CD14-positive monocyte (primary cell): ENCODE measurements at regions of chr19 and their contacts with region 1.

Region 1: DNA sequence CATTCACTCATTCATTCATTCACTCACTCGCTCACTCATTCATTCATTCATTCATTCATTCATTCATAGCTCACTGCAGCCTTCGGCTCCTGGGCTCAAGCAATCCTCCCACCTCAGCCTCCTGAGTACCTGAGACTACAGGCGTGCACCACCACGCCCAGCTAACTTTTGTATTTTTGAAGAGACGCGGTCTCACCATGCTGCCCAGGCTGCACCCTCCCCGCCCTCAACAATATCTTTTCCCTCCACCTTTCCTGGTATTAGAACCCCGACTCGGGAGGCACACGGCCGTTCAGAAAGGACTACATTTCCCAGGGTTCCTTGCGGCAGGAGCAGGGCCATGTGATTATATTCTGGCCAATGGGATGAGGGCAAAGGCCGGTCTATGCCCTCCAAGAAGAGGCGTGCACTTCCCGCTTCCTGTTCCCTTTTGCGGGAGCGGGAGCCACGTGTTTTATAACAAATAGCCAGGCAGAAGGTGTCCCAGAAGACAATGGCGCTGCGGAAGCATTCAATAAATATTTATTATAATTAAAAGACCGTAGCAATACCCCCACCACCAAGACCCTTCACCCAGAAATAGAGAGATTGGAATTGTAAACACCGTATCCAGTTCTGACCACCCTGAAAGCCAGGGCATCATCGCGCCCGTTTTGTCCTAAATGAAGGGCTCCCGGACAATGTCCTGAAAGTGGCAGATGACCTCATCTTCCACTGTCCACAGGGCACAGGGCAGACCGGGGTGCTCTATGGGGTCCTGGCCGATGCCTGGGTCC is 15.9 kb downstream of the TICAM1 start:
- DNase-seq: peak; percentile 88 to 95 (median 92)
- H3K4me3 ChIP-seq: peak overlapping the region; percentile 14 to 71 (median 14)
- H3K4me3 Mint-ChIP-seq: peak overlapping the region; percentile 65 to 83
- H3K27ac ChIP-seq: peak overlapping the region; percentile 26 to 67
- H3K27ac Mint-ChIP-seq: peak overlapping the region; percentile 81 to 100 (median 90)
- H3K4me1 ChIP-seq: peaks cover 56 to 59% of the 10 kb centered on the region in 2 donors
- H3K4me1 Mint-ChIP-seq: peaks cover 39% of the 10 kb centered on the region
- H3K27me3 ChIP-seq: no peaks in the 10 kb centered on the region
- H3K27me3 Mint-ChIP-seq: peaks cover 0 to 6% (median 0%) of the 10 kb centered on the region in 3 donors
- CTCF ChIP-seq: no peak

Region 2: GRCh38 chr19:4831304-4831978 is 15.8 kb after region 1 on chr19 and contains the start of gene TICAM1:
- intact Hi-C with region 1: loop called in 1 of 2 experiments (anchors 1 kb)
- DNase-seq: peak; percentile 87 to 97 (median 91)
- H3K4me3 ChIP-seq: peak within 1 kb of the TSS; percentile 67 to 91 (median 82)
- H3K4me3 Mint-ChIP-seq: peak within 1 kb of the TSS; percentile 96
- H3K27ac ChIP-seq: peak within 1 kb of the TSS; percentile 88 to 96
- H3K27ac Mint-ChIP-seq: peak within 1 kb of the TSS; percentile 91 to 98 (median 94)
- H3K4me1 ChIP-seq: peaks cover 24 to 28% of the 10 kb centered on the region in 2 donors
- H3K4me1 Mint-ChIP-seq: peaks cover 26% of the 10 kb centered on the region
- H3K27me3 ChIP-seq: no peaks in the 10 kb centered on the region
- H3K27me3 Mint-ChIP-seq: peaks cover 0 to 6% (median 0%) of the 10 kb centered on the region in 3 donors
- CTCF ChIP-seq: no peak
- polyA plus RNA-seq, gene TICAM1: 5.9 to 10.7 (median 9.2) TPM

Region 3: DNA sequence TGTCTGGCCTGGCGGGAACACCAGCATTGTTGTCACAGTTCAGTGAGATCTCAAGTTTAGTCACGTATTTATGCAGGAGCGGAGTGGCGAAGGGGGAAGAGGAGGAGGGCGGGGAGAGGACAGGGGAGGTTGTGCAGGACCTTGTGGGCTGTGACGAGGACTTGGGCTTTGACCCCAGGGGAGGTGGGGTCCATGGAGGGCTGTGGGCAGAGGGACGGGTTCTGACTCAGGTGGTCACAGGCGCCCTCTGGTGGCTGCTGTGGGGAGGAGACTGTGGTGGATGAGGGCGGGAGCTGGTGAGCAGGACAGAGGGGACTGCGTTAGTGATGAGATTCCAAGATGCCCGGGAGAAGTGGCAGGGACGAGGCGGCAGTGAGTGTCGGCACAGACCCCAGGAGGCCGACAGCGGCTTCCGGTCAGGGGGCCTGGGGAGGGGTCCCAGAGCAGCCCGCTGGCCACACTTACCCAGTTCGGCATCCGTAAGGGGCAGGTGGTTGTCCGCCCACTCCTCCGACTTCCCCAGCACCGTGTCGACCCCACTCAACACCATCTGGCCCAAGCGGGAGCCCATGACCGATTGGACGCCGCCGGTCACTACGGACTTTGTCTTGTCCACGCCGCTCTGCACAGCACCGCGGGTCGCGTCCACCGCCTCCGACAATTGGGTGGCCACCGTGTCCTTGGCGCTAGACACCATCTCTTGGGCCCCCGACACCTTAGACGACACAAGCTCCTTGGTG is 36.1 kb after region 1 on chr19:
- intact Hi-C with region 1: loop called in 1 of 2 experiments (anchors 5 kb)
- DNase-seq: peak; percentile 48 to 70 (median 49)
- H3K4me3 ChIP-seq: no peak overlapping the region
- H3K4me3 Mint-ChIP-seq: no peak overlapping the region
- H3K27ac ChIP-seq: no peak overlapping the region
- H3K27ac Mint-ChIP-seq: peak overlapping the region in 5 of 7 donors; percentile 30 to 94 (median 69)
- H3K4me1 ChIP-seq: no peaks in the 10 kb centered on the region
- H3K4me1 Mint-ChIP-seq: peaks cover 2% of the 10 kb centered on the region
- H3K27me3 ChIP-seq: no peaks in the 10 kb centered on the region
- H3K27me3 Mint-ChIP-seq: no peaks in the 10 kb centered on the region
- CTCF ChIP-seq: peak; percentile 86

Region 4: GRCh38 chr19:4916292-4917082 is 100.9 kb after region 1 on chr19:
- intact Hi-C with region 1: no loop called
- DNase-seq: peak; percentile 31 to 44 (median 41)
- H3K4me3 ChIP-seq: peak overlapping the region; percentile 64 to 87 (median 86)
- H3K4me3 Mint-ChIP-seq: peak overlapping the region; percentile 93 to 100
- H3K27ac ChIP-seq: peak overlapping the region; percentile 85 to 91
- H3K27ac Mint-ChIP-seq: peak overlapping the region; percentile 91 to 99 (median 97)
- H3K4me1 ChIP-seq: peaks cover 48 to 53% of the 10 kb centered on the region in 2 donors
- H3K4me1 Mint-ChIP-seq: peaks cover 51% of the 10 kb centered on the region
- H3K27me3 ChIP-seq: no peaks in the 10 kb centered on the region
- H3K27me3 Mint-ChIP-seq: peaks cover 0 to 4% (median 0%) of the 10 kb centered on the region in 3 donors
- CTCF ChIP-seq: no peak